ENCODE measurements at regions of chr7 and their contacts with region 1.

Region 1: DNA sequence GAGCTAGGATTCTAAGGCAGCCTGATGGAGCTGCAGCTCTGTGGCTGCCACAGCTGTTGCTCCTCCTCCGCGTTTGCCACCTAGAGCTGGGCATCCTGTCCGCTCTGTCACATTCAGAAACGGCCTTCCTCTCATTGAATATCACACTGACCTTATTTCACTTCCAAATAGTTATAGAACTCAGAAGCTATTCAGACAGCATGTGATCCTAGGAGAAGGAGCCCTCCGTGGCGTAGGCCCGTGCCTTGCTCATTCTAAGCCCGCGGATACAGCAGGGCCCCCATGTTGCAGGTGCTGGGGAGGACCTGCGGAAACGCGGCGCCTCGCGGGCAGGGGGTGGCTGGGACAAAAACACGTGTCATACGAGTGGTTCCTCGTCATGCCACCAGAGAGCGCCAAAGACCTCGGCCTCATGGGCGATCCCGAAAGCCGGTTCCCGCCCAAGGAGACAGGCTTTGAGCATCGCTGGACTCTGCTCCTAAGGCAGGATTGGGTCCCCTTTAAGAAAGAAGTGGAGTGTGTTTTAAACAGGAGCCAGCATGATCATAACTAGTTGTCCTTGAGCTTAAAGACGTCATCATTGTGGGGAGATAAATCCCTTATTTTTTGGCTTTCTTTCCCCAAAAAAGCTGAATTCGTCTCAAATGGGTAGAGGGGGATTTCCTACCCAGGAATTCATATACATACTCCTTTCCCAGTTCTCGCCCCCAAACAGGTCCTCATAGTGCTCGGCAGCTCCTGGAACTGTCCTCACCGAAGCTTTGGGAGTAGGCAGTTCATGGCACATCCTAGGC is 17.9 kb upstream of the FIGNL1 start:
- DNase-seq: peak; percentile 88
- ATAC-seq: peak; percentile 96
- H3K4me3 Mint-ChIP-seq: peak overlapping the region; percentile 47
- H3K27ac Mint-ChIP-seq: peak overlapping the region; percentile 71
- H3K4me1 Mint-ChIP-seq: peaks cover 10% of the 10 kb centered on the region
- H3K27me3 Mint-ChIP-seq: peaks cover 4% of the 10 kb centered on the region

Region 2: GRCh38 chr7:50092579-50093491 is 375.2 kb before region 1 on chr7 and contains the start of gene ZPBP:
- CTCF ChIA-PET with region 1: interaction called, 18 read pairs
- POLR2A ChIA-PET with region 1: no interaction called
- DNase-seq: peak; percentile 71
- ATAC-seq: peak; percentile 80
- H3K4me3 Mint-ChIP-seq: peak within 1 kb of the TSS; percentile 80
- H3K27ac Mint-ChIP-seq: peak within 1 kb of the TSS; percentile 88
- H3K4me1 Mint-ChIP-seq: peaks cover 14% of the 10 kb centered on the region
- H3K27me3 Mint-ChIP-seq: peaks cover 14% of the 10 kb centered on the region
- total RNA-seq, gene ZPBP: not detected

Region 3: GRCh38 chr7:50449881-50450589 is 18.0 kb before region 1 on chr7 and contains the start of gene FIGNL1:
- CTCF ChIA-PET with region 1: interaction called, 11 read pairs
- POLR2A ChIA-PET with region 1: no interaction called
- DNase-seq: peak; percentile 89
- ATAC-seq: peak; percentile 97
- H3K4me3 Mint-ChIP-seq: peak within 1 kb of the TSS; percentile 93
- H3K27ac Mint-ChIP-seq: peak within 1 kb of the TSS; percentile 96
- H3K4me1 Mint-ChIP-seq: peaks cover 51% of the 10 kb centered on the region
- H3K27me3 Mint-ChIP-seq: peaks cover 5% of the 10 kb centered on the region
- total RNA-seq, gene FIGNL1: 40.7 to 41.0 TPM

Region 4: DNA sequence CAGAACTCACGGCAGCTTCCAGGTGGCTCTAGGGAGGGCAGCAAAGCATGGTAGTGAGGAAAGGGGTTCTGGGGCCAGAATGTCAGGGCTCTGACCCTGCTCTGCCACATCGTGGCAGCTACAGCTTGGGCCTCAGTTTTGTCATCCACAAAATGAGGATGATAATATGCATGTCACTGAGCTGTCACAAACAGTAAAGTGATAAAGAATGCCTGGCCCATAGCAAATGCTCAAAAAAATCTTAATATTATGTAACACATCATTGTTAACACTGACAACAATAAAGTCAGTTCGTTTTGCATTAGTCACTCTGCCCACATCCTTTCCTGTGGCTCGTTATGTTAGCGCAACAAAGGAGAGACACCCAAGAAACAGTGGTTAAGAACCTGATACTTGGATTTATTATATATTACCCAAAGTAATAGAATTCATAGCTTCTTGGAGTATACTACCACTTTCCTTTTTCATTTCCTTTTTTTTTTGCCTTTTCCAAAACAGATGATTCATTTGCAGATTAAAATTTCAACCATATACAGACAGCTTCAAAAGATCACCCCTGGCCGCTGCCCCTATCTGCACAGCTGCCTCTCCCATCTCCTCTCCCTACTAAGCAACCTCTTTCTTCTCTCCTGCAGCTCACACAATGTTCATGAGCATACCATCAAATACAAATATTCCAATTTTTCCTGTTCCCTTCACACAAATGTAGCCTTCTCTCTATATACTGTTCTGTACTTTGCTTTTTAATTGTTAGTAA is 142.7 kb after region 1 on chr7:
- CTCF ChIA-PET with region 1: interaction called, 19 read pairs
- POLR2A ChIA-PET with region 1: no interaction called
- DNase-seq: peak; percentile 82
- ATAC-seq: peak; percentile 82
- H3K4me3 Mint-ChIP-seq: peak overlapping the region; percentile 12
- H3K27ac Mint-ChIP-seq: peak overlapping the region; percentile 62
- H3K4me1 Mint-ChIP-seq: peaks cover 52% of the 10 kb centered on the region
- H3K27me3 Mint-ChIP-seq: peaks cover 10% of the 10 kb centered on the region

Region 5: DNA sequence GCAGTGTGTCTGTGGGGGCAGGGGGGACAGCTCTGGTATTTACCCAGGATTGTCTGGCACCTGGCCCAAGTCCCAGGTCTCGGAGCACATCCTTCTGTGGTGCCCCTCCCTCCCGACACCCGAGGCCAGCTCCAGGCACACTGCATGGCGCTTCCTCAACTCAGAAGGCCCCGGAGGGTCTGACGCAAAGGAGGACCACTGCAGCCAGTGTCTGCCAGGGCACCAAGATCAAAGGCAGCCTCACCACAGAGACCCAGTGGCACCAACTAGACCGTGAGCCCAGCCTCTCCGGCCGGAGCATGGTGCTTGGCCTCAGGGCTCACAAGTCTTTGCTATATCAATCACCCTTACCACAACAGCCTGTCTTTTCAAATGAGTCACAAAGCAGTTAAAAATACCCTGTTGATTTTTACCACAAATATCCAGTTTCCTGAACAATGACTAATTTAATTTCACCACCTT is 196.5 kb after region 1 on chr7:
- CTCF ChIA-PET with region 1: interaction called, 30 read pairs
- POLR2A ChIA-PET with region 1: no interaction called
- DNase-seq: peak; percentile 32
- ATAC-seq: peak; percentile 25
- H3K4me3 Mint-ChIP-seq: peak overlapping the region; percentile 43
- H3K27ac Mint-ChIP-seq: peak overlapping the region; percentile 86
- H3K4me1 Mint-ChIP-seq: peaks cover 69% of the 10 kb centered on the region
- H3K27me3 Mint-ChIP-seq: no peaks in the 10 kb centered on the region

Region 6: DNA sequence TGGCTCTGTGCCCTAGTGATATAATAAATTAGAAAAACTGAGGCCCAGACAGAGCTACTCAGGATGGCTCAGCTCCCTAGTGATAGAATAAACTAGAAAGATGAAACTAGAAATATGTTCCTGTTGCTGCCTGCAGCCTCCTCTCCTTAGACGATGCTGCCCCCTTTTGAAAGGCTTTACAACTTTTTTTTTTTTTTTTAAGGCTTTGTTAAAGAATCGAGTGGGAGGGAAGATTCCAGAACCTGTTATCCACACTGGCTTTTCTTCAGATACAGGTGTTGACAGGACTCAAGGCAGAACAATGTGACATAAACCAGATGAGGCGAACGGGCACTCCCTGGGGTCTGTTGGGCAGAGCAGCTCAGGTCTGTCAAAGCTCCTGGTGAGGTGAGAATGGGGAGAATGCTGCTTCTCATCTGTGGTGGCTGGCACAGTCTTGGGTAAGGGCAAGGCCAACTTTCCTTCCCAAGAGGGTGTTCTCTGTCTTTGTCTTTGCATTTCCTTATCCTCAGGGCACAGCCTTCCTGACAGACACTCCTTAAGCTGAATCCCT is 673.5 kb after region 1 on chr7:
- CTCF ChIA-PET with region 1: interaction called, 32 read pairs
- POLR2A ChIA-PET with region 1: no interaction called
- DNase-seq: no peak
- ATAC-seq: no peak
- H3K4me3 Mint-ChIP-seq: no peak overlapping the region
- H3K27ac Mint-ChIP-seq: no peak overlapping the region
- H3K4me1 Mint-ChIP-seq: peaks cover 13% of the 10 kb centered on the region
- H3K27me3 Mint-ChIP-seq: peaks cover 5% of the 10 kb centered on the region

Measured in activated CD8-positive, alpha-beta T cell treated with anti-CD3 and anti-CD28 coated beads, Interleukin-2, amount 10 ng/mL, durations not matched to agents 7 days and 5 days (primary cell).